ENCODE measurements at regions of chr9 and their contacts with region 1.

Region 1: GRCh38 chr9:137509198-137509597 is 41.0 kb downstream of the PNPLA7 start:
- DNase-seq: no peak
- ATAC-seq: no peak
- H3K4me3 Mint-ChIP-seq: no peak overlapping the region
- H3K27ac Mint-ChIP-seq: no peak overlapping the region
- H3K4me1 Mint-ChIP-seq: no peaks in the 10 kb centered on the region
- H3K27me3 Mint-ChIP-seq: no peaks in the 10 kb centered on the region; the same call in 1 of the 2 replicates
- CTCF ChIP-seq: no peak

Region 2: DNA sequence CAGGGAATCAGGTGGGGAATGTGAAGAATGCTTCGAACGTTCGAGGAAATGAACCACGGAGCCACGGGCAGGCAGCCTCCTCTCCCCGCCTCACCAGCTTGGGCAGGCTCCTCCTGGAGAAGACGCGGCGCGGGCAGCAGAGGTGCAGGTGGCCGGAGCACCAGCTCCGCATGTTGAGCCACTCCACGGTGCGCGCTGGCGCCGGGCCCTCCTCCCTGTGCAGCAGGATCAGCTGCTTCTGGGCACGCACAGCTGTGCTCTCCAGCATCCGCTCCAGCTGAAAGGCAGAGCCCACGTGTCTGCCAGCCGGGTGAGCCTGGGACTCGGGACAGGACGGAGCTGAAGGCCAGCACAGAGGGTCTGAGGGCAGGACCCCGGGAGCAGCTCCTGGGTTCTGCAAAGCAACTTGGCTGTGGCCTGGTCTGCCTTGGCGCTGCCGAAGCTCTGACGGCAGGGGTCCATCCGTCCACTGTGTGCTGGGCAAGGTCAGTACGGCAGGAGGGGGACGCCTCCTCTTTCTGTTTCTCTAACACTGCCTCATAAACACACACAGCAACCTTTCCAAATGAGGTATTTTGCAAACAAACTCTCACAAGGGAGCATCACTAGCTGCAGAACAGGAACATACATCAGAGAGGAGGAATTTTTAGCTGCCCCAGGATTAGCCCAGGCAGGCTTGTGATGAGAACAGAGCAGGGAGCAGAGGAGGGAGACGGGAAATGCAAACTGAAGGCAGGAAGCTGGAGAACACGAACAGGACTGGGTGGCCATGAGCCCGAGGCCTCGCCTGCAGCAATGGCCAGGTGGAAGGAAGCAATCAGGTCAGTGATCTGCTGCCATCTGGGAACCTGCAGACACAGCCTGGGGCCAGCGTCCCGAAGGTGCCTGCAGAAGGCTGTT is 30.0 kb before region 1 on chr9:
- CTCF ChIA-PET with region 1: no interaction called
- POLR2A ChIA-PET with region 1: no interaction called
- DNase-seq: no peak
- ATAC-seq: no peak
- H3K4me3 Mint-ChIP-seq: no peak overlapping the region
- H3K27ac Mint-ChIP-seq: no peak overlapping the region
- H3K4me1 Mint-ChIP-seq: 0 out of 2 replicates have a peak, but pooled peaks cover 4% of the 10 kb centered on the region
- H3K27me3 Mint-ChIP-seq: peaks cover 3% of the 10 kb centered on the region; the same call in 1 of the 2 replicates
- CTCF ChIP-seq: no peak

Region 3: DNA sequence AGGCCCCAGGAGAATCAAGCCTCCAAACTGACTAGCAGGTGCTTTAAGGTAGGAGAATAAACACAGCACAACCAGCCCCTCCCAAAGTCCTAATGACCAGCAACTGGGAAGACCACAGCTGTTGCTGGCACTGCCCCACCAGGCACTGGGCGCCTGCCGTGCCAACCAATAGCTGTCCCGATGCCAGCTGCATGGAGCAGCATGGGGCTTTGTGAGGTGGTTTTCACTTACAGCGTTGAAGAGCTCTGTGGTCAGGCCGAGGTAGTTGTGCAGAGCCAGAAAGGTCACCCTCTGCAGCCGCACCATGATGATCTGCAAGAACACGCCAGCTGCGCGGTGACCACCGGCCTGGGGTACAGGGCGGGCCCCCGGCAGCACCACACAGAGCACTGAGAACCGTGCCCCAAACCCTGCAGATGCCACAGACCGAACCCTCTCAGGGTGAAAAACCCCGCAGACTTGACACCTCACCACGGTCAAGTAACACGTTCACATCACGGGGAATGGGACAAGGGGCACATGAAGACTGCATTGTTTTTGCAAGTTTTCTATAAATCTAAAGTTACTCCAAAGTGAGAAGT is 12.3 kb after region 1 on chr9:
- CTCF ChIA-PET with region 1: interaction called, 11 read pairs
- POLR2A ChIA-PET with region 1: no interaction called
- DNase-seq: no peak
- ATAC-seq: no peak
- H3K4me3 Mint-ChIP-seq: no peak overlapping the region
- H3K27ac Mint-ChIP-seq: no peak overlapping the region
- H3K4me1 Mint-ChIP-seq: no peaks in the 10 kb centered on the region
- H3K27me3 Mint-ChIP-seq: no peaks in the 10 kb centered on the region
- CTCF ChIP-seq: no peak

Region 4: GRCh38 chr9:137534256-137535117 is 25.3 kb after region 1 on chr9:
- CTCF ChIA-PET with region 1: interaction called, 11 read pairs
- POLR2A ChIA-PET with region 1: no interaction called
- DNase-seq: no peak
- ATAC-seq: peak; percentile 89
- H3K4me3 Mint-ChIP-seq: no peak overlapping the region
- H3K27ac Mint-ChIP-seq: no peak overlapping the region
- H3K4me1 Mint-ChIP-seq: peaks cover 6% of the 10 kb centered on the region
- H3K27me3 Mint-ChIP-seq: peaks cover 7% of the 10 kb centered on the region; the same call in 1 of the 2 replicates
- CTCF ChIP-seq: no peak

Measured in WTC11 (cell line).